ENCODE measurements at regions of chr3 and their contacts with region 1.

Region 1: DNA sequence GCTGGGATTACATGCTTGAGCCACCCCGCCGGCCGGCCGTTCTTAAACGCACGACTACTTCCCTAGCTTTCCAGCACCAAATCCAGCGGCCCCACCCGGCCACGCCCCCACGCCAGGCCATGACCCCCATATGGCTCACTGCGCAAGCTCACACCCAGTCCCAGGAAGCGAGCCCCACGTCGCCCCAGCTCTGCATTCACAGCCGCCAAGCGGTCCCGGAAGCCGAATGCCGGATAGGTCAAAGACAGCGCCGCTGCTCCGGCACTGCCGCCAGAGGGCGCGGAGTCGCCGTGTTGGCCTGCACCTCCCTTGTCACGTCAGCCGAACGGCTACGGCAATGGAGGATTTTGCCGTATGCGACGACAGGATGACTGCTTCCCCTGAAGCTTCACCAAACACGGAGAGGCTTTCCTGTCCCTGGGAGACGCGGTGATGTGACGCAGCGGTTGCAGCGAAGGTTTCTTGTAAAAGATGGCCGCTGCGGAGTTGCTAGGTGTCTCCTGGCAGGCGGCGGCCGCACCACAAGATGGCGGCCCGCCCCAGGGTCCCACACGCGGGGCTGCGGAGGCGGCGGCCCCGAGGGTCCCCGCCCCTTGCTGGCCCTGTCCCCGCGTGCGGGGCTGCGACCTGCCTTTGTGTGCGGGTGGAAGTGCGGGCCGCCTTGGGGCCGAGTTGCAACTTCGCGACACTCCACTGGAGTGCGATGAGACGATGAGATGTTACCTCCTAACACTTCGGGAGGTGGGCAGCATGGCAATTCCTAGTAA is 30.2 kb upstream of the RPN1 start:
- DNase-seq: peak; percentile 100
- ATAC-seq: peak; percentile 98
- H3K4me3 Mint-ChIP-seq: peak overlapping the region; percentile 84
- H3K27ac Mint-ChIP-seq: peak overlapping the region; percentile 99
- H3K4me1 Mint-ChIP-seq: peaks cover 16% of the 10 kb centered on the region
- H3K27me3 Mint-ChIP-seq: peaks cover 46% of the 10 kb centered on the region
- CTCF ChIP-seq: peak; percentile 83

Region 2: DNA sequence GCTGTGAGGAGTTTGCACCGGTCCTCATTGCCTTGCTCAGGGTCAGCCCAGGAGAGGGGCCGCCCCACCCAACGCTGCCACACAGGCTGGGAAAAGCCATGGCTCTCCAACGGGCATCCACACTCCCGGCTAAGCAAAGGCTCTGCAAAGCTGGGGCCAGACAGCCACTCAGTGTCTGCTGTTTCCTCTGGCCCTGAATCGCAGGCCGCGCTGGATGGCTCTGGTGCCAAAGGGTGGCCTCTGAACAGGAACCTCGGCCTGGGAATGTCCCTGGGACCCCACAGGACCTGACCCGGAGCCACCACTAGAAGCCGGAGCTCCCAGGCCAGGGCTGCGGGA is 73.1 kb before region 1 on chr3:
- CTCF ChIA-PET with region 1: interaction called, 10 read pairs
- POLR2A ChIA-PET with region 1: no interaction called
- DNase-seq: no peak
- ATAC-seq: no peak
- H3K4me3 Mint-ChIP-seq: no peak overlapping the region; the same call in 1 of the 2 replicates
- H3K27ac Mint-ChIP-seq: no peak overlapping the region
- H3K4me1 Mint-ChIP-seq: no peaks in the 10 kb centered on the region
- H3K27me3 Mint-ChIP-seq: peaks cover 7% of the 10 kb centered on the region; the same call in 1 of the 2 replicates
- CTCF ChIP-seq: no peak

Region 3: GRCh38 chr3:128624501-128625300 is 56.1 kb before region 1 on chr3:
- CTCF ChIA-PET with region 1: no interaction called
- POLR2A ChIA-PET with region 1: no interaction called
- DNase-seq: no peak
- ATAC-seq: no peak
- H3K4me3 Mint-ChIP-seq: no peak overlapping the region
- H3K27ac Mint-ChIP-seq: no peak overlapping the region
- H3K4me1 Mint-ChIP-seq: 0 out of 2 replicates have a peak, but pooled peaks cover under 1% of the 10 kb centered on the region
- H3K27me3 Mint-ChIP-seq: no peaks in the 10 kb centered on the region
- CTCF ChIP-seq: no peak

Region 4: GRCh38 chr3:128650096-128651050 is 30.4 kb before region 1 on chr3 and contains the start of gene RPN1:
- CTCF ChIA-PET with region 1: interaction called, 11 read pairs
- POLR2A ChIA-PET with region 1: interaction called, 11 read pairs
- DNase-seq: peak; percentile 94
- ATAC-seq: peak; percentile 98
- H3K4me3 Mint-ChIP-seq: peak within 1 kb of the TSS; percentile 83
- H3K27ac Mint-ChIP-seq: peak within 1 kb of the TSS; percentile 68; the same call in 1 of the 2 replicates
- H3K4me1 Mint-ChIP-seq: peaks cover 12% of the 10 kb centered on the region
- H3K27me3 Mint-ChIP-seq: no peaks in the 10 kb centered on the region
- CTCF ChIP-seq: no peak
- total RNA-seq, gene RPN1: 153 to 163 TPM (median 160 TPM) in 3 replicates

Region 5: GRCh38 chr3:128709508-128710210 is 28.9 kb after region 1 on chr3:
- CTCF ChIA-PET with region 1: interaction called, 11 read pairs
- POLR2A ChIA-PET with region 1: no interaction called
- DNase-seq: no peak
- ATAC-seq: peak; percentile 70
- H3K4me3 Mint-ChIP-seq: no peak overlapping the region
- H3K27ac Mint-ChIP-seq: no peak overlapping the region
- H3K4me1 Mint-ChIP-seq: peaks cover 33% of the 10 kb centered on the region
- H3K27me3 Mint-ChIP-seq: peaks cover 2% of the 10 kb centered on the region; the same call in 1 of the 2 replicates
- CTCF ChIP-seq: no peak

Region 6: GRCh38 chr3:128745742-128746141 is 65.0 kb after region 1 on chr3:
- CTCF ChIA-PET with region 1: interaction called, 30 read pairs
- POLR2A ChIA-PET with region 1: interaction called, 4 read pairs
- DNase-seq: peak; percentile 46
- ATAC-seq: peak; percentile 91
- H3K4me3 Mint-ChIP-seq: no peak overlapping the region
- H3K27ac Mint-ChIP-seq: 0 out of 2 replicates have a peak overlapping the region, but pooled peaks have one; percentile 7
- H3K4me1 Mint-ChIP-seq: no peaks in the 10 kb centered on the region
- H3K27me3 Mint-ChIP-seq: no peaks in the 10 kb centered on the region
- CTCF ChIP-seq: no peak

Region 7: GRCh38 chr3:128780101-128780837 is 99.5 kb after region 1 on chr3:
- CTCF ChIA-PET with region 1: interaction called, 23 read pairs
- POLR2A ChIA-PET with region 1: interaction called, 8 read pairs
- DNase-seq: no peak
- ATAC-seq: no peak
- H3K4me3 Mint-ChIP-seq: no peak overlapping the region
- H3K27ac Mint-ChIP-seq: peak overlapping the region; percentile 8
- H3K4me1 Mint-ChIP-seq: peaks cover 43% of the 10 kb centered on the region
- H3K27me3 Mint-ChIP-seq: no peaks in the 10 kb centered on the region
- CTCF ChIP-seq: no peak

Region 8: GRCh38 chr3:128794770-128795649 is 114.2 kb after region 1 on chr3:
- CTCF ChIA-PET with region 1: interaction called, 44 read pairs
- POLR2A ChIA-PET with region 1: interaction called, 5 read pairs
- DNase-seq: peak; percentile 69
- ATAC-seq: peak; percentile 99
- H3K4me3 Mint-ChIP-seq: no peak overlapping the region
- H3K27ac Mint-ChIP-seq: peak overlapping the region; percentile 47
- H3K4me1 Mint-ChIP-seq: peaks cover 20% of the 10 kb centered on the region
- H3K27me3 Mint-ChIP-seq: no peaks in the 10 kb centered on the region
- CTCF ChIP-seq: peak; percentile 80

Measured in WTC11 (cell line).